Gastrocnemius medialis (tissue), 4 donors: ENCODE measurements at regions of chr2 and their contacts with region 1.

Region 1: GRCh38 chr2:118088051-118089024 is at the start of gene INSIG2:
- DNase-seq: peak; percentile 90 to 91
- ATAC-seq: peak; percentile 98 to 99
- H3K4me3 ChIP-seq: peak within 1 kb of the TSS; percentile 63 to 97 (median 91)
- H3K27ac ChIP-seq: peak within 1 kb of the TSS; percentile 65 to 82 (median 66)
- H3K4me1 ChIP-seq: peaks cover 12 to 24% of the 10 kb centered on the region in 2 donors
- H3K27me3 ChIP-seq: no peaks in the 10 kb centered on the region
- CTCF ChIP-seq: no peak
- POLR2A ChIP-seq: peak; percentile 39 to 40
- total RNA-seq, gene INSIG2: 4.4 to 5.6 (median 5.4) TPM

Region 2: GRCh38 chr2:118032169-118033013 is 55.9 kb before region 1 on chr2:
- in situ Hi-C with region 1: no loop called
- intact Hi-C with region 1: no loop called
- DNase-seq: no peak
- ATAC-seq: peak; percentile 39 to 69
- H3K4me3 ChIP-seq: no peak overlapping the region
- H3K27ac ChIP-seq: no peak overlapping the region
- H3K4me1 ChIP-seq: no peaks in the 10 kb centered on the region
- H3K27me3 ChIP-seq: peaks cover 0 to 4% (median 0%) of the 10 kb centered on the region in 3 donors
- CTCF ChIP-seq: peak; percentile 33 to 71 (median 57)
- POLR2A ChIP-seq: no peak

Region 3: GRCh38 chr2:118186110-118186857 is 97.9 kb after region 1 on chr2:
- in situ Hi-C with region 1: no loop called
- intact Hi-C with region 1: loop called (anchors 1 kb)
- DNase-seq: peak; percentile 63 to 82
- ATAC-seq: peak; percentile 87 to 92
- H3K4me3 ChIP-seq: peak overlapping the region; percentile 60 to 78 (median 66)
- H3K27ac ChIP-seq: peak overlapping the region; percentile 60 to 88 (median 77)
- H3K4me1 ChIP-seq: peaks cover 0 to 9% of the 10 kb centered on the region in 2 donors
- H3K27me3 ChIP-seq: no peaks in the 10 kb centered on the region
- CTCF ChIP-seq: no peak
- POLR2A ChIP-seq: peak; percentile 67 to 76